ENCODE measurements at regions of chr6 and their contacts with region 1.

Region 1: GRCh38 chr6:3052481-3053230 is 15.6 kb upstream of the RIPK1 start:
- DNase-seq: no peak
- H3K4me3 ChIP-seq: peak overlapping the region in 1 of 4 donors; percentile 57
- H3K27ac ChIP-seq: no peak overlapping the region
- H3K4me1 ChIP-seq: peaks cover 6 to 21% (median 7%) of the 10 kb centered on the region in 4 donors
- H3K27me3 ChIP-seq: peaks cover 5% of the 10 kb centered on the region
- CTCF ChIP-seq: no peak
- EP300 ChIP-seq: no peak
- POLR2A ChIP-seq: no peak

Region 2: DNA sequence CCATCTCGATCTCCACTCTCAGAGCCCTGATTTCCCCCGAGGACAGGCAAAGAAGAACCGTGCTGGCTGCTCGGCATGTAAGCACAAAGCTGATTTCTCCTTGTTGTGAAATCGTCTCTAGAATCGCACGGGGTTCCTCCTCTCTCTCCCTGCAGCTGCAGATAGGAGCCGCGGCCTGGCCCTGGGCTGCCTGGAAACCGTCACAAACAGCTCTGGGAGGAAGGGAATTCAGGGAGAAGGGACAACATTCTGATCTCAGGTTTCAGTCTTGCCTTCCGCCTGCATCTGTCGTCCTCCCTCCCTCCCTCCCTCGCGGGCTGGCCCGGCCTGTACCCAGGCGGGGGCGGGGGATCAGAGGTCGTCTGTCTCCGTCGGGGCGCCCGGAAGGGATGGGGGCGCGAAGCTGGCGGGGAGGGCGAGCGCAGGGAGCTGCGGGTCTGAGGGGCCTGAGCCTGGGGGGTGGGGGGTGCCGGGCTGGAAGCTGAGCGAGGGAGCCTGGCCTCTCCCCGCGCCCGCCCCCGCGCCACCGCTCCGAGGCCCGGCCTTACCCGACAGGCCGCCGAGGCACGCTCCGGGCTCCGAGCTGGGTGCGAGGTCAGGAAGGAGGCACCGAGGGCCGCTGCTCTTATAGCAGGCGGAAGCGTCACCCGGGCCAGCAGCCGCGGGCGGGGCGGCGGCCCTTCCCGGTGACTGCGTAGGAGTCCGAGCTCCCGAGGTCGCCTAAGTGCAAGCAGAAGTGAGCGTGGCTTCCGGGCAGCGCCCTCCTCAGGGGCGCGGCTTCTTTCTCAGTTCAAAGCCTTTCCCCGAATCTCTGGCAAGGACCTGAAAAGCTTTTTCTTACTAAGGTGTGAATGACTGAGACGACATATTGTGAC is 211.2 kb before region 1 on chr6 and contains the start of gene SERPINB1:
- in situ Hi-C with region 1: no loop called
- intact Hi-C with region 1: loop called (anchors 5 kb)
- DNase-seq: peak; percentile 95
- H3K4me3 ChIP-seq: peak within 1 kb of the TSS; percentile 39 to 78 (median 62)
- H3K27ac ChIP-seq: peak within 1 kb of the TSS; percentile 95 to 99 (median 97)
- H3K4me1 ChIP-seq: peaks cover 20 to 59% (median 42%) of the 10 kb centered on the region in 4 donors
- H3K27me3 ChIP-seq: no peaks in the 10 kb centered on the region
- CTCF ChIP-seq: no peak
- EP300 ChIP-seq: peak; percentile 72
- POLR2A ChIP-seq: peak; percentile 96
- total RNA-seq, gene SERPINB1: 22.3 to 140 (median 88.4) TPM

Region 3: DNA sequence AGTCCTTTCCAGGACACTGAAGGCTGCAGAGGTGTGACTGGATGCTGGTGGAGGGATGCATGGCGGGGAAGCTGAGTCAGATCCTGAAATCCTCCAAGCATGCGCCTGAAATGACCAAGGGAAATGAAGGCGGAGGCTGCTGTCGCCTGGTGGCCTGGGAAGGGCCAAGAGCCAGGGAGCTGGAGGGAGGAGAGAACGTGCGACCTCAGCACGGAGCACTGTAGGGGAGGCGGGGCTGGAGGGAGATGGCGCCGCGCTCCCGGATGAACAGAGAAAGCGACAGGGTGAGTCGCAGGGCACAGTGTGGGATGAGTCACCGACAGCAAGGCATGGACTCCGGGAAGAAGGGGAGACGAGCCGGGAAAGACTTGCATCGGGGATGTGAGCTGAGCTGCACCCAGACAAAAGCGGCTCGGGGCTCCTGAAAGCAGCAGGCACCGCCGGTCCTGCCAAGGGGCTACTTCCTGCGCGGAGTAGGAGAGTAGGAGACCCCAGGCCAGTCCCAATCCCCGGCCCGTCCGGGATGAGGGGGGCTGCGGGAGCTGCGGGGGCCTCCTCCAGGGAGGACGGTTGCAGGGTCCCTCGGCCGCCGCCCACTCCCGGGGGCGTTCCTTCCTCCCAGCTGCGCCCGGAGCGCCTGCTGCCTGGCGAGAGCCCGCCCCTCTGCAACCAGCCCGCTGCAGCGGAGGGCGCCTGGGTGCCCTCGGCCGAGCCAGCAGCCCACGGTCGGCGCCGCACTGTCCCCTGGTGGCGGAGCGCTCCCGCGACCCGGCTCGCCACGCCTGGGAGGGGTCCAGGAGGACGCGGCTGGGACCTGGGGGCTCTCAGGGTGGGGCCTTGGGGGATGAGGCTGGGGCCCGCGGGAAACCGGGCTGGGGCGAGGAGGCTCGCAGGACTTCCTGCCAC is 64.0 kb before region 1 on chr6:
- in situ Hi-C with region 1: loop called in 2 of 4 experiments (anchors 5 to 10 kb)
- intact Hi-C with region 1: no loop called
- DNase-seq: peak; percentile 90
- H3K4me3 ChIP-seq: peak overlapping the region; percentile 63 to 88 (median 72)
- H3K27ac ChIP-seq: peak overlapping the region; percentile 97 to 99 (median 98)
- H3K4me1 ChIP-seq: peaks cover 17 to 50% (median 35%) of the 10 kb centered on the region in 4 donors
- H3K27me3 ChIP-seq: no peaks in the 10 kb centered on the region
- CTCF ChIP-seq: peak; percentile 82 to 98 (median 92)
- EP300 ChIP-seq: no peak
- POLR2A ChIP-seq: peak; percentile 73

Region 4: DNA sequence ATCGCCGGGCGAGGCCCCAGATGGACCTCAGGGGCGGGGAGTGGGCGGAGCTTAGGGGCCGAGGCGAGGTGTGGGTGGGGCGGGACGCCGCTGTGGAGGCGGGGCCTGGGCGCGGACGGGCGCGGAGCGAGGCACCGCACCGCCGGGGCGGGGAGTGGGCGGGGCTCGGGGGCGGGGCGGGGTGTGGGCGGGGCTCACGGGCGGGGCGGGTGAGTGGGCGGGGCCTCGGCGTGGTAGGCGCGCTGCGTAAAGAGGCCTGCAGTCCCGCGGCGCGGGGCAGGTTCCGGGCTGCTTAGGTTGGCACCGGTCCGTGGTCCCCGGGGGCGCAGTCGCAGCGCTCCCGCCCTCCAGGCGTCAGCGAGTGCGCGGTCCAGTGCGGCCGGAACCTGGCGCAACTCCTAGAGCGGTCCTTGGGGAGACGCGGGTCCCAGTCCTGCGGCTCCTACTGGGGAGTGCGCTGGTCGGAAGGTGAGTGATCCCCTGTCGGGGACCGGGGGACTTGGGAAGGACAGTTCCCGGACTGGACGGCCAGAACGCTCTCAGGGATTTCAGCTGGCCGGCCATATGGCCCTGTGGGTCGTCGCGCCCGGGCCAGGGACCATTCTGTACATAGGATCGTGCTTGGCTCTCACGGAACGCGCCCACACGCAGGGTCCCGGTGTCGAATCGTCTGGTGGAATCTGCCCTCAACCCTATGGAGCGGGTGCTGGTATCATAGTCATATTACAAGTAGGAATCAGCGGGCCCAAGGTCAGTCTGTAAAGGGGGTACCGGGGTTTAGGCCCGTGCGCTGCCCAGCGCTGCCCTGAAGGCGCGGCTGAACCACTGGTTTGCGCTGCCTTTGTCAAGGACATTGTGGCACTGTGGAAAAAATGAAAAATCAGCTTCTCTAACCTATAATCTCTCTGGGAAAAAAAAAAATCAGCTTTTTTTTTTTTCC is 52.8 kb before region 1 on chr6 and contains the start of gene NQO2:
- in situ Hi-C with region 1: loop called in 3 of 4 experiments (anchors 5 to 10 kb)
- intact Hi-C with region 1: loop called (anchors 1 kb)
- DNase-seq: peak; percentile 96
- H3K4me3 ChIP-seq: peak within 1 kb of the TSS; percentile 59 to 77 (median 70)
- H3K27ac ChIP-seq: peak within 1 kb of the TSS; percentile 86 to 88 (median 87)
- H3K4me1 ChIP-seq: peaks cover 9 to 24% (median 19%) of the 10 kb centered on the region in 4 donors
- H3K27me3 ChIP-seq: no peaks in the 10 kb centered on the region
- CTCF ChIP-seq: peak in 1 of 5 experiments; percentile 25
- EP300 ChIP-seq: no peak
- POLR2A ChIP-seq: peak; percentile 89
- total RNA-seq, gene NQO2: 1.00 to 9.7 (median 7.2) TPM

Region 5: GRCh38 chr6:3031857-3032640 is 20.6 kb before region 1 on chr6:
- in situ Hi-C with region 1: no loop called
- intact Hi-C with region 1: no loop called
- DNase-seq: no peak
- H3K4me3 ChIP-seq: no peak overlapping the region
- H3K27ac ChIP-seq: no peak overlapping the region
- H3K4me1 ChIP-seq: peaks cover 0 to 6% (median 0%) of the 10 kb centered on the region in 4 donors
- H3K27me3 ChIP-seq: peaks cover 4% of the 10 kb centered on the region
- CTCF ChIP-seq: no peak
- EP300 ChIP-seq: no peak
- POLR2A ChIP-seq: no peak